AG04449 (cell line): ENCODE measurements at regions of chr13 and their contacts with region 1.

Region 1: DNA sequence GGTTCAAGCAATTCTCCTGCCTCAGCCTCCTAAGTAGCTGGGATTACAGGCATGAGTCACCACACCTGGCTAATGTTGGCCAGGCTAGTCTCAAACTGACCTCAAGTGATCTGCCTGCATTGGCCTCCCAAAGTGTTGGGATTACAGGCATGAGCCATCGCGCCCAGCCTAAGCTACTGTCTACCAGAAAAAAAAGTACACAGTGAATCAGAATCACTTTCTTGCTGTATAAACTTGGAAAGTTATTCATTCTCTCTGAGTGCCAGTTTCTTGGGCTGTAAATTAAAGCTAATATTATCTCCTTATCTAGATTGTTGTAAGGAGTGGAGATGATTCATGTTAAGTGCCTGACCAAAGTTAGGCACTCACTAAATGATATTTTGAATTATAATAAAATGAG is 242.8 kb downstream of the ENOX1 start:
- DNase-seq: no peak
- H3K4me3 ChIP-seq: no peak overlapping the region
- CTCF ChIP-seq: no peak

Region 2: GRCh38 chr13:43387880-43388731 is 155.9 kb before region 1 on chr13:
- CTCF ChIA-PET with region 1: no interaction called
- POLR2A ChIA-PET with region 1: no interaction called
- DNase-seq: no peak
- H3K4me3 ChIP-seq: no peak overlapping the region
- CTCF ChIP-seq: no peak

Region 3: DNA sequence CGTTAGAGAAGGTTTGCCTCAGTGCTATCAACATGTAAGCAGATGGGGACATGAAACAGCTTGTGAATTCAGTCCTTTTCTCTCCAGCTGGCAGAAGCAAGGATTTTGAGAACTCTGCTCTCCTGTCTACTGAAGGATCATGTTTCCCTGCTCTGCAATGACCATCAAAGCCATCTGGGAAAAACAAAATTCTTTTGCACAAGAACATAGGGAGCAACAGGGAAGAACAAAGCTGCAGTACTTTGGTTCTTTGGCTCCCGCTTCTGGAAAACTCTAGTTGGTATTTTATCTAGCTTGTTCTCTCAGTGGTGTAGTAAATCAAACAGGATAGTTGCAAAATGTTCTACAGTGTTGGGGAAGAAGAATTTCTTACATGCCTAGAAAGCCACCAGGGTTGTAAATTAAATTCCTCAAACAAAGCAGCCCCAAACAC is 27.6 kb before region 1 on chr13:
- CTCF ChIA-PET with region 1: no interaction called
- POLR2A ChIA-PET with region 1: interaction called, 11 read pairs
- DNase-seq: peak; percentile 87
- H3K4me3 ChIP-seq: no peak overlapping the region
- CTCF ChIP-seq: no peak

Region 4: GRCh38 chr13:43528992-43529391 is 15.0 kb before region 1 on chr13:
- CTCF ChIA-PET with region 1: no interaction called
- POLR2A ChIA-PET with region 1: no interaction called
- DNase-seq: no peak
- H3K4me3 ChIP-seq: no peak overlapping the region
- CTCF ChIP-seq: no peak